Activated CD4-positive, alpha-beta memory T cell treated with anti-CD3 and anti-CD28 coated beads for 36 hours (primary cell): ENCODE measurements at regions of chr3 and their contacts with region 1.

Region 1: GRCh38 chr3:71305231-71306206 is 278.0 kb downstream of the FOXP1 start:
- DNase-seq: peak; percentile 22
- H3K4me3 Mint-ChIP-seq: peak overlapping the region; percentile 77
- H3K27ac Mint-ChIP-seq: peak overlapping the region; percentile 87
- H3K4me1 Mint-ChIP-seq: peaks cover 86% of the 10 kb centered on the region
- H3K27me3 Mint-ChIP-seq: no peaks in the 10 kb centered on the region

Region 2: DNA sequence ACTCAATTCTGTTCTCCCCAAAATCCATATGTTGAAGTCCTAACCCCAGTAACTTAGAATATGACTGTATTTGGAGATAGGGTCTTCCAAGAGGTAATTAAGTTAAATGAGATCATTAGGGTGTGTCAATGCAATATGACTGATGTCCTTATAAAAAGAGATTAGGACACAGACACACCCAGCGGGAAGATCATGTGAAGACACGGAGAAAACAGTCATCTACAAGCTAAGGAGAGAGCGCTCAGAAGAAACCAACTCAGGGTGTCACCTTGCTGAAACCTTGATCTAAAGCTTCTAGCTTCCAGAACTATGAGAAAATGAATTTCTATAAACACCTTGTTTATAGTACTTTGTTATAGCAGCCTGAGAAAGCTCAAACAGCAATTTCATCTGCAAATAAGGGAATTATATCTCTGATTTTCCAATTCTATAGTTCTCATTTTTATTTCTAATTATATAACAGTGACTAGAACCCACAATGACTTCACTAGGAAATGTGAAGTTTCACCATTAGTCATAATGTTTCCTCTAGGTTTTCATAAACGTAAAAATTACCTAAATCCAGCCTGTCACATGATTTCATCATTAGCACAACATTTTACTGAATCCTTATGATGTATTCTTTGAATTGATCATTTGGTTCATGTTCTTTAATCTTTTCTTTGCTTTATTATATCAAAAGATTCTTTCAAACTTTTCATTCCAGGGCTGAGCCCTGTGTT is 533.9 kb before region 1 on chr3:
- CTCF ChIA-PET with region 1: no interaction called
- POLR2A ChIA-PET with region 1: no interaction called
- intact Hi-C with region 1: loop called (anchors 2 kb)
- DNase-seq: no peak
- H3K4me3 Mint-ChIP-seq: no peak overlapping the region
- H3K27ac Mint-ChIP-seq: no peak overlapping the region
- H3K4me1 Mint-ChIP-seq: peaks cover 5% of the 10 kb centered on the region
- H3K27me3 Mint-ChIP-seq: peaks cover 33% of the 10 kb centered on the region

Region 3: GRCh38 chr3:71010726-71011455 is 294.6 kb before region 1 on chr3:
- CTCF ChIA-PET with region 1: interaction called, 3 read pairs
- POLR2A ChIA-PET with region 1: interaction called, 3 read pairs
- intact Hi-C with region 1: loop called (anchors 2 kb)
- DNase-seq: peak; percentile 87
- H3K4me3 Mint-ChIP-seq: peak overlapping the region; percentile 56
- H3K27ac Mint-ChIP-seq: peak overlapping the region; percentile 92
- H3K4me1 Mint-ChIP-seq: peaks cover 68% of the 10 kb centered on the region
- H3K27me3 Mint-ChIP-seq: no peaks in the 10 kb centered on the region

Region 4: GRCh38 chr3:71130471-71131374 is 174.8 kb before region 1 on chr3:
- CTCF ChIA-PET with region 1: interaction called, 3 read pairs
- POLR2A ChIA-PET with region 1: interaction called, 7 read pairs
- intact Hi-C with region 1: loop called (anchors 1 kb)
- DNase-seq: peak; percentile 81
- H3K4me3 Mint-ChIP-seq: peak overlapping the region; percentile 93
- H3K27ac Mint-ChIP-seq: peak overlapping the region; percentile 94
- H3K4me1 Mint-ChIP-seq: peaks cover 68% of the 10 kb centered on the region
- H3K27me3 Mint-ChIP-seq: no peaks in the 10 kb centered on the region

Region 5: DNA sequence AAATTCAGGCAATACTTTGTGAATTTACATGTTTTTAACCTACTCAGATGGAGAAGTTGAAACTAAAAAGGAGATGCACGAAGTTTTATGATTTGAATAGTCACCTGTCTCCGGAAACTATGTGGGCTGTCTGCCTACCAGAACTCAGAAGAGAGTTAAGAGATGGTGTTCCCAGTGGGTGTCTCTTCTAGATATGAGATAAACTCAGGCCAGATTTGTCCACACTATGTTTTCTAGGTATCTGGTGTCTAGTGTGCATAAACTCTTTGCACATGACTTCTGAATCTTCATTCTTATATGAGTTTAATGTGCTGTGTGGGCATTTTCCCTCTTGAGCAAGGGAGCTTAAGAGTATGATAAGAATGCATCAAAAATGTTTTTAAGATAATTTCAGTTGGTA is 55.2 kb after region 1 on chr3:
- CTCF ChIA-PET with region 1: interaction called, 4 read pairs
- POLR2A ChIA-PET with region 1: interaction called, 50 read pairs
- intact Hi-C with region 1: loop called (anchors 1 kb)
- DNase-seq: peak; percentile 52
- H3K4me3 Mint-ChIP-seq: peak overlapping the region; percentile 39
- H3K27ac Mint-ChIP-seq: peak overlapping the region; percentile 89
- H3K4me1 Mint-ChIP-seq: peaks cover 76% of the 10 kb centered on the region
- H3K27me3 Mint-ChIP-seq: no peaks in the 10 kb centered on the region

Region 6: DNA sequence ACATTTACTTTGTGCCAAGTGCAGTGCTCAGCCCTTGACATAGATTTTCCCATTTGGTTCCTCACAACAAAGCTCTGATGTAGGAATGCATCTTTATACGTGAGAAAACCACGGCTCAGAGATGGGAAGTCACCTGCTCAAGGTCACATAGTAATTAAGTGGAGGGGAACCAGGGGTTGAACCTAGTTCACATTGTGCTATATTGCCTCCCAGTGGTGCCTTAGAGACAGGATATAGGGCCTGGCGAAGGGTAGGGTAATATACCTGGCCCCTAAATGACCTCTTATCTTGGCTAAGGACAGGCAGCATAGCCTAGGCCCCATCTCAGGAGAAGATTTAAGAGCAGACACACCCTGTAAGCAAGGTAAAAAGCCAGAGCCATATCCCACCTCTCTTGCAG is 206.5 kb after region 1 on chr3:
- CTCF ChIA-PET with region 1: interaction called, 4 read pairs
- POLR2A ChIA-PET with region 1: no interaction called
- intact Hi-C with region 1: loop called (anchors 1 kb)
- DNase-seq: peak; percentile 46
- H3K4me3 Mint-ChIP-seq: no peak overlapping the region
- H3K27ac Mint-ChIP-seq: no peak overlapping the region
- H3K4me1 Mint-ChIP-seq: peaks cover 6% of the 10 kb centered on the region
- H3K27me3 Mint-ChIP-seq: no peaks in the 10 kb centered on the region